ENCODE measurements at regions of chr2 and their contacts with region 1.

Region 1: DNA sequence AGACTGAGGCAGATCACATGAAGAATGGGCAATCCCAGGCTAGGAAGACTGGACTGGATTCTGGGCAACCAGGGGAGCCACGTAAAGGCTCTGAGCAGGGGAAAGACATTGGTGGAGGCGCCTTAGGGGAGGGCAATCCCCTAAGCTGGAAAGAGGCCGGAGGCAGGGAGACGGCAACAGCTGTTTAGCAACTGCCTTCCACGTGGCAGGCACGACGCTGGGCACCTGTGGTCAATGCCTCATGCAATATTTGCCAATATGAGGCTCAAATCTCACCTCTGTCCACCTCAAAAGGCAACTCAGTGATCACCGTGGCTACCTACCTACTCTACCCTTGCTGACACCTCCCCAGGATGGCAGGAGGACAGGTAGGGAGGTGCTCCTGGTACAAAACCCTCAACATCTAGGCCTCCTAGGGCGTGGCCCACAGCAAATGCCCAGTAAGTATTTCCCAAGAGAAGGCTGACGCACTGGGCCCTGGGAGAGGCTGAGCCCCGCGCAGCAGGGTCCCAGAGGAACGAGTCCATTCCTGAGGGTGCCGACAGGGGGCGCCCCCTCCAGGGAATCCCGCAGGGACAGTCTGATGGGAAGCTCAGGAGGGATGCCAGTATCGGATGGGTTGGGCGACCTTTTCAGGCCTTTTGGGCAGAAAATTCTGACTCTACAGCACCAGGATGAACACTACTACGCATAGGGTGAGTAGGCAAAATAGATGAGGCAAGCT is 8.9 kb downstream of the BOLA3 start:
- DNase-seq: peak; percentile 74
- ATAC-seq: peak; percentile 87
- H3K4me3 Mint-ChIP-seq: no peak overlapping the region
- H3K27ac Mint-ChIP-seq: no peak overlapping the region
- H3K4me1 Mint-ChIP-seq: no peaks in the 10 kb centered on the region; the same call in 1 of the 2 replicates
- H3K27me3 Mint-ChIP-seq: no peaks in the 10 kb centered on the region
- CTCF ChIP-seq: peak; percentile 91

Region 2: DNA sequence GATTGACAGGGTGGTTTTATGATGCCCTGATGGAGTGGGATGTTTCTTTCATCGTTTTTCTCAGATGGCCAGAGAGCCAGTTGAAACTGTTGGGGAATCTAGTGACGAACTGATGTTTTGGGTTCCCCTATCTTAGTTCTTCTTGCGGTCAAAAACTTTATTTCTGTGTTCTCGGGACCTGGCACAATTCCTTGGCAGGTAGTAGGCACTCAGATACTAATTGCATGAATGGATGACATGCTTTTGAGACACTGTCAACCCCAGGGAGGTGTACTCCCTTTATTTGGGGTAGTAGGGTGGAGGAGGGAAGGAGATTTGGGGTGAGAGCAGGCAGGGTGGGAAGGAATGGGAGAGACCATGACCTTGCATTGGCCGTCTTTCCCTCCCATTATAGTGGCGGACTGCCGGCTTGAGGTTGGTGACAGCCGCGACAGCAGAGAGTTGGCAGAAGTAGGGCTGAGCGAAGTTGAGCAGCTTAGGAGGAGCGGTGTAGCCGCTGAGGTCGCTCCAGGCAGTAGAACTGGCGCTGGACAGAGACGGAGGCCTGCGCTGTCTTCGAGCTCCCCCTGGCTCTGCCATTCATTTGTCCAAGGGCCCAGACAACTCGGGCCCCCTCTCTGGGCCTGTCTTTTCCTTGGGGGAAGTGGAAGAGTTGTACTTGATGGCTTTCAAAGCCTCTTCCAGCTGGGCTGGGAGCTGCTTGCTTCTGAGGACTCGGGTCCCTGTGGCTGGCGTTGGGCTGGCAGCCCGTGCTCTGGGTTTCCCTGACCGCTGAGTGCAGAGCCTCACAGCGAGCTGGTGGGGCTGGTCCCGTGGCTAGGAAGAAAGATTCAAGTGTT is 151.4 kb before region 1 on chr2:
- CTCF ChIA-PET with region 1: interaction called, 10 read pairs
- POLR2A ChIA-PET with region 1: no interaction called
- DNase-seq: no peak
- ATAC-seq: peak; percentile 14
- H3K4me3 Mint-ChIP-seq: peak overlapping the region; percentile 76
- H3K27ac Mint-ChIP-seq: no peak overlapping the region
- H3K4me1 Mint-ChIP-seq: peaks cover 55% of the 10 kb centered on the region
- H3K27me3 Mint-ChIP-seq: peaks cover 15% of the 10 kb centered on the region
- CTCF ChIP-seq: no peak

Region 3: DNA sequence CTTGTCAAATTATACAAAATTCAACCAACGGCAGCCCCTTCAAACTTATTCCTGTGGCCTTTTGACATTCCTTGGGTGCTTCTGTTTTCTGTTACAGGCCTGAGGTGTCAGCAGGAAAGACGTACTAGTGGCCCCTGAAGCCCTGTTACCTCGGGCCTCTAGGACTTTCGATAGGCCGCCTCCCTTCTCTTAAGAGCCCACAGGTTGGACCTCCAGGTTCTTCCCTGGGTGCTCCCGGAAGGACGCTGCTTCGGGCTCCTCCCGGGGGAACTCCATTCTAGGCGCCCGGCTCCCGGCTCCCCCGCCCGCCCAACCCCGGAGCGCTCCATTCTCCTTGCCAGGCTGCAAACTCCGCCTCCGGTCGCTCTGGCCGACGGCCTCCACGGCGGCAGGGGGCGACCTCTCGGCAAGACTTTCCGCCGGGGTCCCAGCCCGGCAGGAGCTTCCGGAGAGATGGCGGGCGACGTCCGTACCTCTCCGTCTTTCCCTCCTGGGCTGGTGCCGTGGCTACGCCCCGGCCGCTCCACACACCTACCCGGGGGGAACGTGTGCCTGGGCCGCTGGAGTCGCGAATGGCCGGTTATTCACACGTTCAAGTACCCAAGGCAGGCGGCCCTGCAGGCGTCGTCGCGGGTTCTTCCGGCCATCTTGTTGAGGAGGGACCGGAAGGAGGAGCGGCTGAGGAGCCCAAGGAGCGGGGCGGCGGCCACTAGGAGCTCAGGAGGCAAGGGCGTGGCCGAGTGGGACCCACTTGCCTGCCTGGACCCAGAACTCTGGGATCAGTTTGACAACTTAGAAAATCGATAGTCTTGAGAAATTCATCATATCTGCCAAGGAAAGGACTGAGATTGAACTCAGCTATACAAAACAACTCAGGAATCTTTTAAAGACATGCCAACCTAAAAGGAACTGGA is 18.6 kb before region 1 on chr2:
- CTCF ChIA-PET with region 1: interaction called, 15 read pairs
- POLR2A ChIA-PET with region 1: no interaction called
- DNase-seq: peak; percentile 86
- ATAC-seq: peak; percentile 96
- H3K4me3 Mint-ChIP-seq: peak overlapping the region; percentile 61
- H3K27ac Mint-ChIP-seq: no peak overlapping the region
- H3K4me1 Mint-ChIP-seq: no peaks in the 10 kb centered on the region
- H3K27me3 Mint-ChIP-seq: peaks cover 76% of the 10 kb centered on the region
- CTCF ChIP-seq: no peak

Region 4: GRCh38 chr2:74178201-74179062 is 39.7 kb after region 1 on chr2 and contains the start of gene MOB1A:
- CTCF ChIA-PET with region 1: interaction called, 10 read pairs
- POLR2A ChIA-PET with region 1: no interaction called
- DNase-seq: peak; percentile 99
- ATAC-seq: peak; percentile 98
- H3K4me3 Mint-ChIP-seq: peak within 1 kb of the TSS; percentile 86
- H3K27ac Mint-ChIP-seq: peak within 1 kb of the TSS; percentile 94
- H3K4me1 Mint-ChIP-seq: peaks cover 14% of the 10 kb centered on the region
- H3K27me3 Mint-ChIP-seq: no peaks in the 10 kb centered on the region
- CTCF ChIP-seq: no peak
- total RNA-seq, gene MOB1A: 84.9 to 92.6 TPM (median 88.2 TPM) in 3 replicates